Astrocyte of the cerebellum (primary cell): ENCODE measurements at regions of chr2 and their contacts with region 1.

Region 1: DNA sequence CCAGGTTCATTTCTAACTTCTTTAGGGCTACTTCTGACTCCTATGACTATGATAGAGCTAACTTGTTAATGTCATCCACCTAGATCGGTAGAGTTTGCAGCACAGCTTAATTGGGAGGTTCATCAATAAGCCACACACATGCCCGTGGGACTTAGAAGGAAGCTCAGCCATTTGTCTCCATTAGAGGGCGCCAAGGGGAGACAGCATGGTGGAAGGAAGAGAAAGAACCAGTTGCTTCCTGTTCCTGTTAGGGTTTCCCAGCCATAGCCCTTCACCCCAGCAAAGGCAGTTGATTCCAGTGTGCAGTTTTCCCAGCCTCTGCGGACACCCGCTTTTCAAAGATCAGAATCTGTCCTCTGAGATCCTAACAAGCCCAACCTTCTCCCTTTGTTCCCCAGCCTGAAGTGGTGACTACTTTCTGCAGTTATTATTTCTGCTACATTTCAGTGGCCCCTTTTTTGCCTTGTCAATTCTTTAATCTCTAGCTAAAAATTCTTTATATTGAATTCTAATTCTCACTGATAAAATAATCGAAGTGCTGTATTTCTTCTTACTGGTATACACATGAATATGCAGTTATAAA is 30.3 kb downstream of the MAIP1 start:
- DNase-seq: peak; percentile 54
- H3K4me3 ChIP-seq: no peak overlapping the region
- CTCF ChIP-seq: peak; percentile 76

Region 2: DNA sequence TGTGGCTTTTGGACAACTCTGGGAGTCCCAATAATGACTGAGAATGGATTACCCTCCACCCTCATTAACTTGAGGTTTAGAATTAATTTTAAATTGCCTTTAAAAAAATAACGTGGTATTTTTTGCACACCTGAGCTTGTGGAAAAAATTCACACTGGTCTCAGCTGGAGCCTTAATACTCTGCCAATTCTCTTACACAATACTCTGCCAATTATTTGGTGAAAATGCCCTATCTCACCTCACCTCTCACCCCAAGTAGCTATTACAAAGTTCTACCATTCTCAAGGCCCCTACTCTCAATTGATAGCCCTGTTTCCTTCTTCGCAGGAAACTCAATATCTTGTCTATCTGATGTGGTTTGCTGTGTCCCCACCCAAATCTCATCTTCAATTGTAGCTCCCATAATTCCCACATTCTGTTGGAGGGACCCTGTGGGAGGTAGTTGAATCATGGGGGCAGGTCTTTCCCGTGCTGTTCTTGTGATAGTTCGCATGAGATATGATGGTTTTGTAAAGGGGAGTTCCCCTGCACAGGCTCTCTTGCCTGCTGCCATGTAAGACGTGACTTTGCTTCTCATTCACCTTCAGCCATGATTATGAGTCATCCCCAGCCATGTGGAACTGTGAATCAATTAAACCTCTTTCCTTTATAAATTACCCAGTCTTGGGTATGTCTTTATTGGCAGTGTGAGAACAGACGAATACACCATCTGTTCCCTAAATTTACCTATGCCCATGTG is 102.1 kb before region 1 on chr2:
- in situ Hi-C with region 1: no loop called
- DNase-seq: no peak
- H3K4me3 ChIP-seq: no peak overlapping the region
- CTCF ChIP-seq: no peak

Region 3: GRCh38 chr2:200274116-200275075 is 288.7 kb after region 1 on chr2:
- in situ Hi-C with region 1: loop called (anchors 25 kb)
- DNase-seq: no peak
- H3K4me3 ChIP-seq: no peak overlapping the region
- CTCF ChIP-seq: no peak